CD8-positive, alpha-beta T cell (primary cell): ENCODE measurements at regions of chr2 and their contacts with region 1.

Region 1: DNA sequence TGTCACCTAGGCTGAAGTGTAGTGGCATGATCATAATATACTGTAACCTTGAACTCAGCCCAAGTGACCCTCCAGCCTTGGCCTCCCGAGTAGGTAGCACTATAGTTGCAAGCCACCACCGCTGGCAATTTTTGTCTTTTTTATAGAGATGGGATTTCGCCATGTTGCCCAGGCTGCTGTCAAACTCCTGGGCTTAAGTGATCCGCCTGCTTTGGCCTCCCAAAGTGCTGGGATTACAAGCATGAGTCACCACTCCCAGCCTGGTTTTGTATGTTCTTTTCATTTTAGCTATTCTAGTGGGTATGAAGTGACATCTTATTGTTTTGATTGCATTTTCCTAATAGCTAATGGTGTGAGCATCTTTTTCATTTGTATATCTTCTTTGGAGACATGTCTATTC is 11.3 kb upstream of the EXOC6B start:
- DNase-seq: no peak
- ATAC-seq: no peak
- H3K4me3 ChIP-seq: no peak overlapping the region
- H3K4me3 Mint-ChIP-seq: no peak overlapping the region
- H3K27ac ChIP-seq: no peak overlapping the region
- H3K27ac Mint-ChIP-seq: no peak overlapping the region
- H3K4me1 ChIP-seq: no peaks in the 10 kb centered on the region
- H3K4me1 Mint-ChIP-seq: peaks cover 5% of the 10 kb centered on the region
- H3K27me3 ChIP-seq: no peaks in the 10 kb centered on the region
- H3K27me3 Mint-ChIP-seq: peaks cover 14% of the 10 kb centered on the region
- CTCF ChIP-seq: no peak

Region 2: GRCh38 chr2:72862239-72862988 is 25.2 kb after region 1 on chr2:
- CTCF ChIA-PET with region 1: interaction called, 17 read pairs
- POLR2A ChIA-PET with region 1: no interaction called
- intact Hi-C with region 1: no loop called
- DNase-seq: peak; percentile 69 to 91 (median 84)
- ATAC-seq: peak; percentile 94
- H3K4me3 ChIP-seq: peak overlapping the region; percentile 0 to 16
- H3K4me3 Mint-ChIP-seq: peak overlapping the region; percentile 48
- H3K27ac ChIP-seq: no peak overlapping the region
- H3K27ac Mint-ChIP-seq: no peak overlapping the region
- H3K4me1 ChIP-seq: peaks cover 5% of the 10 kb centered on the region
- H3K4me1 Mint-ChIP-seq: peaks cover 11% of the 10 kb centered on the region
- H3K27me3 ChIP-seq: peaks cover 8 to 13% of the 10 kb centered on the region in 2 experiments
- H3K27me3 Mint-ChIP-seq: peaks cover 54% of the 10 kb centered on the region
- CTCF ChIP-seq: peak; percentile 73

Region 3: GRCh38 chr2:72915907-72916742 is 79.0 kb after region 1 on chr2:
- CTCF ChIA-PET with region 1: no interaction called
- POLR2A ChIA-PET with region 1: no interaction called
- intact Hi-C with region 1: no loop called
- DNase-seq: peak in 6 of 9 experiments; percentile 22 to 60 (median 44)
- ATAC-seq: peak; percentile 41
- H3K4me3 ChIP-seq: peak overlapping the region; percentile 44 to 57
- H3K4me3 Mint-ChIP-seq: peak overlapping the region; percentile 79
- H3K27ac ChIP-seq: no peak overlapping the region
- H3K27ac Mint-ChIP-seq: no peak overlapping the region
- H3K4me1 ChIP-seq: peaks cover 44% of the 10 kb centered on the region
- H3K4me1 Mint-ChIP-seq: peaks cover 29% of the 10 kb centered on the region
- H3K27me3 ChIP-seq: peaks cover 46 to 60% of the 10 kb centered on the region in 2 experiments
- H3K27me3 Mint-ChIP-seq: peaks cover 64% of the 10 kb centered on the region
- CTCF ChIP-seq: no peak